ENCODE measurements at regions of chr1 and their contacts with region 1.

Region 1: GRCh38 chr1:160085686-160086455 is 4.5 kb downstream of the KCNJ9 start:
- DNase-seq: peak; percentile 51
- H3K27ac ChIP-seq: no peak overlapping the region
- CTCF ChIP-seq: no peak; the same call in 1 of the 2 replicates

Region 2: GRCh38 chr1:161098210-161099068 is 1012.6 kb after region 1 on chr1 and contains the start of gene KLHDC9:
- CTCF ChIA-PET with region 1: no interaction called
- POLR2A ChIA-PET with region 1: no interaction called
- DNase-seq: peak; percentile 82
- H3K27ac ChIP-seq: peak within 1 kb of the TSS; percentile 80
- CTCF ChIP-seq: no peak

Region 3: DNA sequence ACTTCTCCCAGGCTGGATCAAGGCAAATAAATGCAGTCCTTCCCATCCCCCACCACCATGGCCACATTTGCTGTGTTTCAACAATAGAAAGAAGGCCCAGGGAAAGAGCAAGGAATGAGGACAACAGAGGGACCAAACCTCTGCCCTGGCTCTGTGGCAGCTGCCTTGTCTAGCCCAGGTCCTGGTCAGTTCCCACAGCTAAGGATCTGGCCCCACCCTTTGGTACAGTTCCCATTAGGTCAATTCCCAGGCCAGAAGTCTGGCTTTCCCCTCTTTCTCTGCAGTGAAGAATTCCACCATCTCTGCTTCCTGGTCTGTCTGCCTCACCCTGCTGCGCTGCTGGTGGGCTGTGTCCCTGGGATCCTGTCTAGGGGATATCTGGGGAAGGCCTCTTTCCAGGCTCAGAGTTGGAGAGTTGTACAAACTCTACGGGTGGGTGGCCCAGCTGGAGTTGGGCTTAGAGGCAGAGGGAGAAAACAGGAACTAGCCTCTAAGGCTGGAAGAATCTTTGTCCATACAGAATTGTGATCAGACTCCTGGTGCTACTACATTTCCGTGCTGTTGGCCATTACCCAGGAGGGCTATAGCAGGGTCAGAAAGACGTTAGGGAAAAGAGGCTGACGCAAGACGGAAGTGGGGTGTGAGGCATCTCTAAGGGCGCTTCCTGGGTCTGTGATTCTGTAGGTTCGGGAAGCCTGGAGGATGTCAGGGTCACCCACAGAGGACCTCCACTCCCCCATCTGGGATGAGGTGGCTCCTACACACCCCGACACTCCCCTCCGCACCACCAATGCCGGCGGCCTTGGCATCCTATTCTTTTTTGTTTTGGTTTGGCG is 1115.3 kb after region 1 on chr1:
- CTCF ChIA-PET with region 1: interaction called, 10 read pairs
- POLR2A ChIA-PET with region 1: no interaction called
- DNase-seq: no peak
- H3K27ac ChIP-seq: peak overlapping the region; percentile 94
- CTCF ChIP-seq: no peak

Measured in RWPE1 (cell line).